ENCODE measurements at regions of chr1 and their contacts with region 1.

Region 1: GRCh38 chr1:58432851-58433668 is 113.5 kb downstream of the OMA1 start:
- DNase-seq: peak; percentile 22
- H3K4me3 ChIP-seq: no peak overlapping the region
- H3K27ac ChIP-seq: no peak overlapping the region
- H3K4me1 ChIP-seq: peaks cover 17% of the 10 kb centered on the region
- H3K27me3 ChIP-seq: no peaks in the 10 kb centered on the region
- CTCF ChIP-seq: no peak
- POLR2A ChIP-seq: no peak

Region 2: DNA sequence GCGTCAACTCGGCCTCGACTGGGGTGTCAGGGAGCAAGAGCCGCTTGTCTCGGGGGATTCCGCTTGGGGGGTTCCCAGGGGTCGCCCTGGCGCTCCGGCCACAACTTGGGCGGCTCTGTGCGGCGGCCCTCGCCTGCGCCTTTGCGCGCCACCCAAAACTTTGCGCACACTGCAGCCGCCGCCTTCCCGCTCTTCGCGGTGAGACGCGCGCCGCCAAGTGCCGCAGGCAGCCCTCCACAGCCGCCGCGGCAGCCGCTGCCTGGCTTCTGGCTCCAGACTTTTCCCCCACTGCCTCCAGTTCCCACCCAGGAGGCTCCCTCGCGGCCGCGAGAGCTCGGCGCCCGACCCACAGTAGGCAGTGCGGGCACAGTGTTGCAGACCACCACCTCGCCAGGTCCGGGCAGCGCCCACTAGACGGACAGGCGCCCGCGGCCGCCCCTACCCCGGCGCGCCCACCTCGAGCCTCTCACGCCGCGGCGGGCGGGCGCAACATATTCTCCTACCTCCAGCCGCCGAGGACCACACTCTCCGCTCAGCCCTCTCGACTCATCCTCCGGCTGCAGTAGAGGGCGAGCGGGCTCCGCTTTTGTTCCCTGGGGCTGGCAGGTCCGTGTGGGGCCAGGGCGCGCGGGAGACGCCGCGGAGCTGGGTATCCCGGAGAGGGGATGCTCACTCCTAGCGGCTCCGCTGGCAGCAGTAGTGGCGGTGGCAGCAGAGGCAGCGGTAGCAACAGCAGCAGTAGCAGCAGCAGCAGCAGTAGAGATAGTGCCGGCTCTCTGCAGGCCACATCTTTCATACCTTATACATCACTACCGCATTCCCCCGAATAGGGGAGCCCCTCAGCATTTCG is 183.1 kb before region 1 on chr1:
- CTCF ChIA-PET with region 1: no interaction called
- POLR2A ChIA-PET with region 1: no interaction called
- dilution Hi-C with region 1: no loop called
- intact Hi-C with region 1: loop called (anchors 10 kb)
- DNase-seq: peak; percentile 11
- H3K4me3 ChIP-seq: no peak overlapping the region
- H3K27ac ChIP-seq: no peak overlapping the region
- H3K4me1 ChIP-seq: no peaks in the 10 kb centered on the region
- H3K27me3 ChIP-seq: peaks cover 16 to 21% of the 10 kb centered on the region in 2 experiments
- CTCF ChIP-seq: no peak
- POLR2A ChIP-seq: no peak

Region 3: DNA sequence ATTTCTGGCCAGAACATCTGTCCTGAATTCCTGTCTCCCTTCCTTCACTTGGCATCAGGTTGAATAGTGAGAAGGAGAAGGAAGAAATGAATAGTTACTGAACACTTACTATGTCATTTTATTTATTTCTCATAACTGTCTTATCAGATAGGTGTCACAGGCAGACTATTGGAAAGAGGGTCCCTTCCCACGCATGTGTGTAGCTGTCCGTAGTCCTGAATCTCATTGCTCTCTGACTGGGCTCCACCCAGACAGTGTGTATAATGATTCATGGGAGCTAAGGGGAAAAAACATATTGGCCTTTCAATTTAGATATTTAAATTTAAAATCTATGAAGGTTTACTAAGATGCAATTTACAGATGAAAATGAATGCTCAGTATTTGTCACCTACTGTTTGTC is 27.4 kb after region 1 on chr1:
- CTCF ChIA-PET with region 1: no interaction called
- POLR2A ChIA-PET with region 1: no interaction called
- dilution Hi-C with region 1: no loop called
- intact Hi-C with region 1: no loop called
- DNase-seq: peak; percentile 20
- H3K4me3 ChIP-seq: no peak overlapping the region
- H3K27ac ChIP-seq: no peak overlapping the region
- H3K4me1 ChIP-seq: no peaks in the 10 kb centered on the region
- H3K27me3 ChIP-seq: no peaks in the 10 kb centered on the region
- CTCF ChIP-seq: no peak
- POLR2A ChIP-seq: no peak

Region 4: DNA sequence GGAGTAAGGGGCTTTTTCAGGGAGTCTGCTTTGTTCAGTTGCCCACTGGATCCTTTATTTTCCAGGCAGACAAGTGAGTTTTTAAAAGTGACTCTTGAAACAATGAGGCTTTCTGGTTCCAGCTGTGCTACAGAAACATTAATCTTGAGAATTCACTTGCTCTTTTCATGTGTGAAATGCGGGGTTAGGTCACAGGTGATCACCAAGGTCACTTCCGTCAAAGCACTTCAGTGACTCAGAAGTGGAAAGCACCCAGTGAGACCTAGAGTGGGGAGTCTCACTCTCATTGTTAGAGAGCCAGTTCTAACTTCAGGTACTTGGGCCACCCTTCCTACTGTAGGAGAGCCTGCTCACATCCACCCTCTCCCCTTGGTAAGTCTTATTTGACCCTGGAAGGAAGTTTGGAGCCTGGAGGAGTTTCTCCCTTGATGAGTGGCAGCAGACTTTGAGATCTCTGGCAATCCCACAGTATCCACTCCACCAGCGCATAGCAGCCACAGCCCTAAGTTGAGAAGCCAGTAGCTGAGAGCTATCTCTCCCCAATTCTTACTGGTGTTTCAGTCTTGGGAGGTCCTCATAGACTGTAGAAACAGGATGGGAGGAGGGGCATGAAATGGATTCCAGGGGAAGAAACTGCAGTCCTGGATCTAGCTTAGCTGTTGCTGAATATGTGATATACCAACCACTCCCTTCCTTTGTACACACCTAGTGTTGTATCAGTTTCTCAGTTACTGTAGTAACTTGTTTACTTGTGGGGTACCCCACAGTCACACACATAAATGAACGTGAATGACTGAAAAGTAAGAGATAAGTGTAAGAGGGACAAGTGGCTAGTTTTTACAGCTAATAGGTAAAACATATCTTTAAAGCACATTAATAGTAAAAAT is 140.9 kb after region 1 on chr1:
- CTCF ChIA-PET with region 1: no interaction called
- POLR2A ChIA-PET with region 1: no interaction called
- dilution Hi-C with region 1: no loop called
- intact Hi-C with region 1: no loop called
- DNase-seq: peak; percentile 68
- H3K4me3 ChIP-seq: no peak overlapping the region
- H3K27ac ChIP-seq: no peak overlapping the region
- H3K4me1 ChIP-seq: peaks cover 22% of the 10 kb centered on the region
- H3K27me3 ChIP-seq: no peaks in the 10 kb centered on the region
- CTCF ChIP-seq: no peak
- POLR2A ChIP-seq: no peak

Region 5: DNA sequence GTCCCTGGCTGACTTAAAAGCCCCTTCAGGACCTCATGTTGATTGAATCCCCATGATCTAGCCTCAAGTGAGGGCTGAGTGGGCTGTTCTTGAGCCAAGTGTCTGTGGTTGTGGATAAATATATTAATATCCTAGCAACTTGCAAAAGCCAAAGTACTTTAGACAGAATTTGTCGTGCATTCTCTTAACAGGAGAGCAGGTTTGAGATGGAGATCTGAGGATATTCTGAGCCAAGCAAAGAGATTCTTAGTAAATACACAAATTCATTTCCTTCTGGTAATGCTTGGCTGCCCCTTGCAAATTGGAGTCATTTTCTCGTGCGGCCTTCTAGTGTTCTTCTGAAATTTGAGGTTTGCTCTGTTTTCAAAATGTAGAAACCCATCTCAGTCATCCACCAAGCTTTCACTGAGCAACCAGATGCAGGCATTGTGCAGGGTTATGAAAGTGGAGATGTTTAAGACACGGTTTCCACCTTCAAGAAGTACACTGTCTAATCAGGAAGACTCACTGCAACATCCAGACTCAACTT is 592.9 kb after region 1 on chr1:
- CTCF ChIA-PET with region 1: no interaction called
- POLR2A ChIA-PET with region 1: no interaction called
- dilution Hi-C with region 1: no loop called
- intact Hi-C with region 1: no loop called
- DNase-seq: no peak
- H3K4me3 ChIP-seq: no peak overlapping the region
- H3K27ac ChIP-seq: no peak overlapping the region
- H3K4me1 ChIP-seq: peaks cover 34% of the 10 kb centered on the region
- H3K27me3 ChIP-seq: no peaks in the 10 kb centered on the region
- CTCF ChIP-seq: no peak
- POLR2A ChIP-seq: no peak

Measured in endothelial cell of umbilical vein (primary cell).